AG04449 (cell line): ENCODE measurements at regions of chr12 and their contacts with region 1.

Region 1: GRCh38 chr12:72296389-72296788 is 24.2 kb downstream of the TRHDE start:
- DNase-seq: no peak
- H3K4me3 ChIP-seq: no peak overlapping the region
- CTCF ChIP-seq: no peak

Region 2: GRCh38 chr12:72271451-72272090 is 24.8 kb before region 1 on chr12:
- CTCF ChIA-PET with region 1: interaction called, 3 read pairs
- POLR2A ChIA-PET with region 1: interaction called, 10 read pairs
- DNase-seq: no peak
- H3K4me3 ChIP-seq: peak overlapping the region; percentile 93
- CTCF ChIP-seq: no peak

Region 3: GRCh38 chr12:72547573-72547972 is 251.2 kb after region 1 on chr12:
- CTCF ChIA-PET with region 1: no interaction called
- POLR2A ChIA-PET with region 1: no interaction called
- DNase-seq: no peak
- H3K4me3 ChIP-seq: no peak overlapping the region
- CTCF ChIP-seq: no peak